ENCODE measurements at regions of chr18 and their contacts with region 1.

Region 1: DNA sequence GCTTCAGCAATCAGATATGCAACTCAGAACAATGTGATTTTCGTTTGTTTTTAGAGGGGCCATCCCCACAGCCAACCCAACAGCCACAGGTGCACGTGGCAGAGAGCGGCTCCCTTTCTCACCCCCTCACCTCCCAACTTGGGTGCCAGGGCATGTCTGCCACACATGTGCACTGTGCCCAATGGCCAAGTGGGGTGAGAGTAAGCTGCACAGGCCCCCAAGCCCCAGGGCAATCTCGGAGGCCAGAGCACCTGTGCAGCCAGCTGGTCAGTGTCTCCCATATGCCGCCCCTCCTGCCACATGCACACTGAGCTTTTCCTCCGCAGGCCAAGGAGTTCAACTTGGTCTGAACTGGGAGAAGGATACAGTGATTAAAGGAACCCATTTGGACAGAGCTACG is 1130.2 kb downstream of the DSC3 start:
- ATAC-seq: no peak
- H3K4me3 ChIP-seq: no peak overlapping the region
- H3K27ac ChIP-seq: no peak overlapping the region
- H3K4me1 ChIP-seq: no peaks in the 10 kb centered on the region

Region 2: GRCh38 chr18:30016179-30016578 is 103.8 kb after region 1 on chr18:
- in situ Hi-C with region 1: loop called in 1 of 9 experiments (anchors 25 kb)
- ATAC-seq: peak in 1 of 8 experiments; percentile 29
- H3K4me3 ChIP-seq: no peak overlapping the region
- H3K27ac ChIP-seq: no peak overlapping the region
- H3K4me1 ChIP-seq: no peaks in the 10 kb centered on the region